ENCODE measurements at regions of chr7 and their contacts with region 1.

Region 1: GRCh38 chr7:131546583-131547111 is 9.8 kb downstream of the PODXL start:
- DNase-seq: peak; percentile 39 to 48
- H3K4me3 ChIP-seq: no peak overlapping the region
- H3K27ac ChIP-seq: no peak overlapping the region
- H3K4me1 ChIP-seq: peaks cover 14% of the 10 kb centered on the region
- H3K27me3 ChIP-seq: no peaks in the 10 kb centered on the region
- CTCF ChIP-seq: peak; percentile 88

Region 2: GRCh38 chr7:130927062-130927461 is 619.6 kb before region 1 on chr7:
- CTCF ChIA-PET with region 1: no interaction called
- POLR2A ChIA-PET with region 1: interaction called, 14 read pairs
- intact Hi-C with region 1: no loop called
- DNase-seq: no peak
- H3K4me3 ChIP-seq: no peak overlapping the region
- H3K27ac ChIP-seq: no peak overlapping the region
- H3K4me1 ChIP-seq: peaks cover 25% of the 10 kb centered on the region
- H3K27me3 ChIP-seq: no peaks in the 10 kb centered on the region
- CTCF ChIP-seq: no peak

Region 3: DNA sequence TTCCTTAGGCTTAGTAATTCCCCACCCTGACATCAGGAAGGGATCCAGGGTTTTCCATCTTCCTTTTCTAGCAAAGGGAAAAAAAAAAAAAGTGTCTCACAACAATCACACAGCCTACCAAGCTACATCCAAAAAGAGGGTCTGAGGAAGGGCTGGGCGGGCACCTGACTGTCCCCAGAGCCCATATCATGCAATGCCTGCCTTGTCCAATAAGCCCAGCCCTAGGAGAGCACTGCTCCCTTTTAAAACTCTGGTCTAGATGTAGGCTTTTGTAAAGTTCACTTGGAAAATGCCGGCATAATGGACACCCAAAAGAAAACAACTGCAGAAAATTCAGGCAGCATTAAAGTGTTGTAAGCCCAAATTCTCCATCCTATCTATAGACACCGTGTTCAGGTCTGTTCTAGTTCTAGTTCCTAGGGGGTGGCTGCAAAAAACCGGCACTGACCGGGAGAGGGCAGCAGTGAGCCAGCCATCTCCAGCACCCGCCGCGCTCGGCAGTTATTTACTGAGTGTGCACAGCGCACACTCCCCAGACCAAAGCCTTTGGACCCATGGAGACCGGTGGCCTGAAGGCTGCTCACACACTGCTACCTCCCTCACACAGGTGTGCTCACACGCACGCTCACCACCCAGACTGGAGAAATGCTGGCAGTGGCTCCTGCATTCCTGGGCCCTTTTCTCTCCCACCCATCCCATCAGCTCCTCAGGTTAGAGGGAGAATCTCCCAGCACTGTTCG is 38.9 kb before region 1 on chr7:
- CTCF ChIA-PET with region 1: no interaction called
- POLR2A ChIA-PET with region 1: no interaction called
- intact Hi-C with region 1: loop called (anchors 1 kb)
- DNase-seq: peak; percentile 47 to 85
- H3K4me3 ChIP-seq: no peak overlapping the region
- H3K27ac ChIP-seq: no peak overlapping the region
- H3K4me1 ChIP-seq: no peaks in the 10 kb centered on the region
- H3K27me3 ChIP-seq: no peaks in the 10 kb centered on the region
- CTCF ChIP-seq: peak; percentile 95

Region 4: GRCh38 chr7:131529179-131529578 is 17.5 kb before region 1 on chr7:
- CTCF ChIA-PET with region 1: no interaction called
- POLR2A ChIA-PET with region 1: no interaction called
- intact Hi-C with region 1: no loop called
- DNase-seq: no peak
- H3K4me3 ChIP-seq: no peak overlapping the region
- H3K27ac ChIP-seq: no peak overlapping the region
- H3K4me1 ChIP-seq: 0 out of 2 replicates have a peak, but pooled peaks cover 7% of the 10 kb centered on the region
- H3K27me3 ChIP-seq: no peaks in the 10 kb centered on the region
- CTCF ChIP-seq: no peak

Region 5: DNA sequence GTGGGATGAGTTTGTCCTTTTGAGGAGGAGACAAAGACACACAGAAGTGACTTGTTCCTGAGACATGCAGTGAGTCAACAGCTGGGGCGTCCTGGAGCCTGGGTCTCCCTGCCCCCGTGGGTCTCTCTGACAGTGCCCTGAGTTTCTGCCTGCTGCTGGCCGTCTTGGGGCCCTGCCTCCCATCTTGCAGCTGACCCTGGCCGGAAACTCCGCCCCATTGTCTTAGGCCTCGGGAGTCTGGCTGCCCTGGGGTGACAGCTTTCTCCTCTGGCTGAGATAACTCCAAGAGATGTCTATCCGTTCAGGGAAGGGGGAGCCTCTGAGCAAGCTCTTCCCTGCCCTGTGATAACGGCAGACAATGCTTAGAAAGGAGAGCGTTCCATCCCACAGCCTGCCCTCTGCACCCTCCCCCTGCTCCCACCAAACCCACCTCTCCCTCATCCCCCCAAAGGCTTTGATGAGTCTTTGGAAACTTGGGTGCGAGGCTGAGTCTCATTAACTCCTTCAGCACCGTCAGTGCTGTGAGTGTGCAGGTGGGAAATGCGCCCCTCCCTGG is 79.2 kb after region 1 on chr7:
- CTCF ChIA-PET with region 1: interaction called, 4 read pairs
- POLR2A ChIA-PET with region 1: interaction called, 10 read pairs
- intact Hi-C with region 1: no loop called
- DNase-seq: peak; percentile 92 to 96
- H3K4me3 ChIP-seq: peak overlapping the region; percentile 18; the same call in 1 of the 2 replicates
- H3K27ac ChIP-seq: peak overlapping the region; percentile 87
- H3K4me1 ChIP-seq: peaks cover 66% of the 10 kb centered on the region
- H3K27me3 ChIP-seq: no peaks in the 10 kb centered on the region
- CTCF ChIP-seq: no peak

Region 6: DNA sequence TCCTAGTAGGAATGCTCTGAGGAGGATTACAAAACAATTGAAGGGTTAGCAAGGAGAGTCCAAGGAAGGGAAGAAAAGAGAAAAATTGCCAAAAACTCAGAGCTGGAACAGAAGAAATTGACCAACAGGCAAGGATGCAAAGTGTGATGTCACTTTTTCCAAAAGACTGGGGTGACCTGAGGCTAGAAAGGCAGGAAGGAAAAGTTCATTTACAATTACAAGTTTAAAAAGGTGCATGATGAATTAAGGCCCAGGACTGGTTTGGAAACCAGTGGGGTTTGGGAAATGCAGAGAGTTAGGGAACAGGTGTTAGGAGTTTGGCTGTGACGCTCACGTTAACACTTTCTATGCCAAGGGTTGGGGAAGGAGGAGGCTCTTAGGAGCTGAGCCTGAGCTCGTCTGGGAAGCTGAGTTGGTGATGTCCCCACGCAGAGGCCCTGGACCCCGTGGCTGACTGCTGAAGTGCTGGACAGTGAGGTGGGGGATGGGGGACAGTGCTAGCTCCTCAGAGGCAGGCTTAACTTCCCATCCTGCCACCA is 102.4 kb after region 1 on chr7:
- CTCF ChIA-PET with region 1: interaction called, 17 read pairs
- POLR2A ChIA-PET with region 1: no interaction called
- intact Hi-C with region 1: loop called (anchors 1 kb)
- DNase-seq: no peak
- H3K4me3 ChIP-seq: no peak overlapping the region
- H3K27ac ChIP-seq: no peak overlapping the region
- H3K4me1 ChIP-seq: peaks cover 27% of the 10 kb centered on the region
- H3K27me3 ChIP-seq: no peaks in the 10 kb centered on the region
- CTCF ChIP-seq: no peak

Region 7: DNA sequence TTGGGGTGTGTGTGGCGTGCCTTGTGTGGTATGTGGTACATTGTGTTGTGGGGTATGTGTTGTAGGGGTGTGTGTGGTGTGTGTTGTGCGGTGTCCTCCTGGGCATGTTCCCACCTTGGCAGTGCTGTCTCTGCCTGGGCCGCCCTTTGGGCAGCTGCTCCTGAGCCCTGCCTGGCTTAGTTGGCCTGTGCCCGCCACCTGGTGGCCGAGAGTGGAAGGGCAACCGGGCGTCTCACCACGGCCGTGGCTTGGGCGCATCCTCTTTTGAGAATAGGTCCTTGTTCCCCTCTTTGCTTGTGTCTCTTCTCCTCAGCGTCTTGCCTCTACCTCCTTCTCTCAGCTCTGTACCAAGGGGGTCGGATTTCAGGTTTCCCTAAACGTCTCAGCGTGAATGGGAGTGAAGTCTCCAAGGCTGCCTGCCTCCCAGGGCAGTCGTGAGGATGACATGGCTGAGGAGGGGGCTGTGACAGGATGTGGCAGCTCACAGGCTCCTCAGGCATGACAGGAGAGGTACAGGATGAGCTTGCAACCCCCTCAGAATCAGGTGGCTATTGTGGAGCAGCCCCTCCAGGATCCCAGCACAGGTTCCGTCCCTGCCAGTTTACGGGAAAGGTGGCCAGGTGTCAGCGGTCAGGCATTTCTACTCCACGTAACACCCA is 108.2 kb after region 1 on chr7:
- CTCF ChIA-PET with region 1: interaction called, 9 read pairs
- POLR2A ChIA-PET with region 1: no interaction called
- intact Hi-C with region 1: loop called (anchors 1 kb)
- DNase-seq: peak; percentile 72 to 90
- H3K4me3 ChIP-seq: no peak overlapping the region
- H3K27ac ChIP-seq: 0 out of 2 replicates have a peak overlapping the region, but pooled peaks have one; percentile 54
- H3K4me1 ChIP-seq: peaks cover 17% of the 10 kb centered on the region
- H3K27me3 ChIP-seq: no peaks in the 10 kb centered on the region
- CTCF ChIP-seq: peak; percentile 97

Region 8: DNA sequence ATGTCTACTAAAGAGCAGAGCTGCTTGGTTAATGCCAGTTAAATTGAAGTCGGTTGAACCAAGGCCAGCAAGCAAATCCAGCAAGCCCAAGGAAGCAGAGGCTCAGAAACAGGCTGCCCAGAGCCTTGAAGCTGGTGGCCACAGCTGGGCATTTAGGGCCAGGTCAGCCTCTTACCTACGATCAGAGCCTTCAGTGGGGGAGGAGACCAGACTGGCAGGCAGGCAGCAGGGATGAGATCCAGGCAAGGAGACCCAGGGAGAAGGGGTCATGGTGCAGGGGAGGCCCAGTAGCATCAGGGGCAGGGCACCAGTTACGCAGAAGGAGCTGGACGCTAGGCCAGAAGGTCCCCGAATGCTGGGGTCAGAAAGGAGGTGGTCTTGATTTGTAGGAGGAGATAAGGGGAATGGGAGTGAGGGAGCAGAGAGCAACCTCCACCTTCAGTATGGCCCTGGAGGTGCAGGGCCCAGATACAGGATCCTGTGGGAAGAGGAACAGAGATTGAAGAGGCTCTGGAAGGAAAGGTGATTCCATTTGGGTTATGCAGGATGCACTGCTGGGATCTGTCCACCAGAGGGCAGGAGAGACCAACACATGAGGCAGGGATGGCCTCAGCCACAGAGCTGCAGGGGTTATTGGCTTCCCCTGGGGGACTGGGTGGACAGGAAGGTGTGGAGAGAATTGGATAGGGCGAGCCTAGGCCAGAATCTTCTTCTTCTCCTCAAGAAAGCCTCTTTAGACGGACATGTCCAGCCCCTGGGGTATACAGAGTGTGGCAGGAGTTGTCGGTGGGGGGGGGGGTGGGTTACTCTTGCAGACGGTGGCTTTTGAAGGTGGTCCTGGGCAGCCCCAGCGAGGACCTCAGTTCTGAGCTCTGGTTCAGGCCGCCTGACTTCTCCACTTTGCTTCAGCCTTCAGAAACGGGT is 142.4 kb after region 1 on chr7:
- CTCF ChIA-PET with region 1: no interaction called
- POLR2A ChIA-PET with region 1: no interaction called
- intact Hi-C with region 1: no loop called
- DNase-seq: peak; percentile 43 to 70
- H3K4me3 ChIP-seq: no peak overlapping the region
- H3K27ac ChIP-seq: no peak overlapping the region
- H3K4me1 ChIP-seq: no peaks in the 10 kb centered on the region
- H3K27me3 ChIP-seq: peaks cover 95% of the 10 kb centered on the region
- CTCF ChIP-seq: peak; percentile 98

Region 9: DNA sequence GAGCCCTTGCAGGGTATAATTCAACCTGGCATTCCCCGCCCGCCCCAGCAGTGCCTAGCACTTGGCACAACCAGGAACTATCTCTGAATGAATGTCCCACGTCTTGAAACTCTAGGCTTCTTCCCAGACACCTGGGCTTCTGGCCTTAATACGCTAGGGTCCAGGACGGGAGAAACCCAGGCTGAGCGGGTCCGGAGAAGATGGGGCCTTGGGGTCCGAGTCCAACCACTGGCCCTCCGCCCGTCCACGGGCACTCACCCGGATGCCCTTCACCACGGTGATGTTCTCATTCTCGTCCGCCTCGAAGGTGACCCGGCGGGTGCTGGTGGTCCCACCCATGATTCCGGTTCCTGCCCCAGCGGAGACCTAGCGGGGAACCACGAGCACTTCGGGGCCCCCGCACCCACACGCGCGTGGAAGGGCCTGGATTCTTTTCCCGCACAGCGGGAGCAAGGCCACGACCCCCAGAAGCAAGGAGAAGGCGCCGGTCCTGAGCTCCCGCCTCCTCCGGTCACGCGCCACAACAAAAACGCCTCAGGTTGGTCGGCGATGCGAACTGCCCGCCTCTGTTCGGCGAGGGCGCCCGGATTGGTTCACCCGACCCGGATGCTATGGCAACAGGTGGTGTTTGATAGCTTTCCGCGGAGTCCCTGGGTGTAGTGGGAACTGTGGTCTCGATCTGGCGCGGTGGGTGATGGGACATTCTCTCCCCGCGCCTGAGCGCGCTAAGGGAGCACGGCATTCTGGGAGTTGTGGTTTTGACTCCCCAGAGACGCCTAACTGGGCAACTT is 1535.1 kb after region 1 on chr7 and contains the start of gene CHCHD3:
- CTCF ChIA-PET with region 1: interaction called, 11 read pairs
- POLR2A ChIA-PET with region 1: no interaction called
- intact Hi-C with region 1: no loop called
- DNase-seq: peak; percentile 98
- H3K4me3 ChIP-seq: peak within 1 kb of the TSS; percentile 88
- H3K27ac ChIP-seq: 0 out of 2 replicates have a peak within 1 kb of the TSS, but pooled peaks have one; percentile 10
- H3K4me1 ChIP-seq: peaks cover 9% of the 10 kb centered on the region; the same call in 1 of the 2 replicates
- H3K27me3 ChIP-seq: peaks cover 14% of the 10 kb centered on the region; the same call in 1 of the 2 replicates
- CTCF ChIP-seq: no peak
- total RNA-seq, gene CHCHD3: 77.7 and 100 TPM in 2 replicates

Measured in PC-9 (cell line).